ENCODE measurements at regions of chr21 and their contacts with region 1.

Region 1: DNA sequence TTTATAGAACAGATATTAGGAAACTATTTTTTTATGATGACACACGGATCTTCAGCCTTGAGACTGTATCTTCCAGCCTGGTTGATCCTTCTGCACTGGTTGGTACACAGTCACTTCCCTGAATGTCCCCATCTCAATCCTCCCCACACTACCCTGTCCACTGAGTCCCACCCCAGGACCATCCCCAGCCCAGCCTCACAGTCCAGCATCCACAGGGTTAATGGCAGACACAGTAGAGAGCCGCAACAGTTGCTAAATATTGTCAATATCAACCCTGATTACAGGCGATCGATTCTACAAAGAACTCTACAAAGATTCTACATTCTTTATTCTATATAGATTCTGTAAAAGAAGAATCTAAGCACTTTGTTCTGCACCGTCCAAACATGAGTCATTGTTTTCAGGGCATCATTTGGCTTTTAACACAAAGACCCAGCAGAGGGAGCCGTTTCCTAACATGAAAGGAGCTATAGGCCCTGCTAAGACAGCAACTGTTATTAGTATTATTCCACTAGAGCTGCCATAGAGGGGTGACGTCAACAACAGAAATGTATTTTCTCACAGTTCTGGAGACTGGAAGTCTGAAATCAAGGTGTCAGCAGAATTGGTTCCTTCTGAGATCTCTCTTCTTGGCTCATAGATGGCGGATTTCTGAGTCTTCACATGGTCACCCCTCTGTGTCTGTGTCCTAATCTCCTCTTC is 30.1 kb upstream of the IFNAR2 start:
- DNase-seq: peak; percentile 89
- H3K4me3 ChIP-seq: no peak overlapping the region
- H3K27ac ChIP-seq: peak overlapping the region; percentile 33 to 53 (median 48)
- H3K4me1 ChIP-seq: peaks cover 0 to 29% (median 17%) of the 10 kb centered on the region in 4 donors
- H3K27me3 ChIP-seq: no peaks in the 10 kb centered on the region
- CTCF ChIP-seq: peak; percentile 36 to 77 (median 72)
- EP300 ChIP-seq: no peak
- POLR2A ChIP-seq: no peak

Region 2: DNA sequence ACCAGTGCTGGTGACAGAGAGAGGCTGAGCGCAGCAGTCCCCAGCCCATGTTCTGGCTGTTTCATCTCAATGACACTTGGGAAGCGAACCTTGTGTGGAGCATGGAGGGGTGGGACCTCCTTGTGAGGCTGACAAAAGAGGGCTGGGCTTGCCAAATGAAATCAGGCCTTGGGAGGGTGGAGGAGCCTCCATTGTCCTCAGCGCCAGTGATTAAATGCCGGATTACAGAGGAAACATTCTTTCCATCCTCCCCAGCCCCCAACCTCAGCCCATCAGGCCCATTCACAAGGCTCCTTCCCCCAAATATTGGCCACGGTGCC is 364.8 kb before region 1 on chr21:
- intact Hi-C with region 1: loop called (anchors 5 kb)
- DNase-seq: no peak
- H3K4me3 ChIP-seq: no peak overlapping the region
- H3K27ac ChIP-seq: no peak overlapping the region
- H3K4me1 ChIP-seq: peaks cover 0 to 5% (median 0%) of the 10 kb centered on the region in 4 donors
- H3K27me3 ChIP-seq: no peaks in the 10 kb centered on the region
- CTCF ChIP-seq: no peak
- EP300 ChIP-seq: no peak
- POLR2A ChIP-seq: no peak

Region 3: GRCh38 chr21:33171616-33172169 is 28.0 kb before region 1 on chr21:
- intact Hi-C with region 1: no loop called
- DNase-seq: no peak
- H3K4me3 ChIP-seq: no peak overlapping the region
- H3K27ac ChIP-seq: no peak overlapping the region
- H3K4me1 ChIP-seq: no peaks in the 10 kb centered on the region
- H3K27me3 ChIP-seq: peaks cover 0 to 52% (median 10%) of the 10 kb centered on the region in 3 donors
- CTCF ChIP-seq: no peak
- EP300 ChIP-seq: no peak
- POLR2A ChIP-seq: no peak

Region 4: GRCh38 chr21:33229784-33230544 is 30.3 kb after region 1 on chr21 and contains the start of gene IFNAR2:
- intact Hi-C with region 1: loop called (anchors 1 kb)
- DNase-seq: peak; percentile 78
- H3K4me3 ChIP-seq: peak within 1 kb of the TSS; percentile 86 to 100 (median 96)
- H3K27ac ChIP-seq: peak within 1 kb of the TSS; percentile 96 to 98 (median 98)
- H3K4me1 ChIP-seq: peaks cover 0 to 22% (median 14%) of the 10 kb centered on the region in 4 donors
- H3K27me3 ChIP-seq: no peaks in the 10 kb centered on the region
- CTCF ChIP-seq: no peak
- EP300 ChIP-seq: no peak
- POLR2A ChIP-seq: peak in 1 of 2 donors; percentile 48
- total RNA-seq, gene IFNAR2: 7.6 to 19.0 (median 12.2) TPM

Region 5: GRCh38 chr21:33360881-33361602 is 161.4 kb after region 1 on chr21:
- intact Hi-C with region 1: loop called (anchors 5 kb)
- DNase-seq: peak; percentile 80
- H3K4me3 ChIP-seq: no peak overlapping the region
- H3K27ac ChIP-seq: peak overlapping the region; percentile 4 to 55 (median 36)
- H3K4me1 ChIP-seq: peaks cover 0 to 19% (median 12%) of the 10 kb centered on the region in 4 donors
- H3K27me3 ChIP-seq: no peaks in the 10 kb centered on the region
- CTCF ChIP-seq: peak; percentile 61 to 83 (median 80)
- EP300 ChIP-seq: no peak
- POLR2A ChIP-seq: no peak

Region 6: GRCh38 chr21:33608559-33608958 is 408.9 kb after region 1 on chr21:
- intact Hi-C with region 1: loop called (anchors 10 kb)
- DNase-seq: no peak
- H3K4me3 ChIP-seq: no peak overlapping the region
- H3K27ac ChIP-seq: no peak overlapping the region
- H3K4me1 ChIP-seq: no peaks in the 10 kb centered on the region
- H3K27me3 ChIP-seq: no peaks in the 10 kb centered on the region
- CTCF ChIP-seq: no peak
- EP300 ChIP-seq: no peak
- POLR2A ChIP-seq: no peak